ENCODE measurements at regions of chr5 and their contacts with region 1.

Region 1: DNA sequence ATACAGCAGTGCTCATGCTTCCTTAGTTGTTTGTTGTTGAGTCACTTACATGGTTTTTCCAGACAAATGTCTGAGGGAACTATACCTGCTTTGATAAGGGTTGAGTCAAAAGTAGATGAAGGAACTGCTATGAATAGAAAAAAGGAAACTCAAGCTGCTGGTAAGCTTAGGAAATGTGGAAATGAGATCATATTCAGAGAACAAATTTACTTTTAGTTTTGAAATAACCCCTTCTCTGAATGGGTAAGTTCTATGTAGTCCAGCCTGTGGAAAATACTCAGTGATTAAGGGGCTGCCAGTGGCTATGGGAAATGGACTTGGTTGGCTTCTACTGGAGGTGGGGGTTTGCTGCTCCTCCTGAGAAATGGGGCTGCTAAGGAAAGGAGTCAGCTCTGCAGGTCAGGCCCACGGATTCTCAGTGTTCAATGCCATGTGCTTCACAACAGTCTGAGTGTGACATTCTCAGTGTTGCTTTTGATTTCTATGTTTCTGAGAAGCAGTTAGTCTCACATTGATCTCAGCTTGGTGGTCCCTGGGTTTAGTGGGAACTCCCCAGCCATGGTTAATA is 47.7 kb upstream of the GLRX start:
- DNase-seq: peak; percentile 27
- H3K4me3 Mint-ChIP-seq: peak overlapping the region; percentile 55
- H3K27ac Mint-ChIP-seq: peak overlapping the region; percentile 90
- H3K4me1 Mint-ChIP-seq: peaks cover 43% of the 10 kb centered on the region
- H3K27me3 Mint-ChIP-seq: no peaks in the 10 kb centered on the region

Region 2: DNA sequence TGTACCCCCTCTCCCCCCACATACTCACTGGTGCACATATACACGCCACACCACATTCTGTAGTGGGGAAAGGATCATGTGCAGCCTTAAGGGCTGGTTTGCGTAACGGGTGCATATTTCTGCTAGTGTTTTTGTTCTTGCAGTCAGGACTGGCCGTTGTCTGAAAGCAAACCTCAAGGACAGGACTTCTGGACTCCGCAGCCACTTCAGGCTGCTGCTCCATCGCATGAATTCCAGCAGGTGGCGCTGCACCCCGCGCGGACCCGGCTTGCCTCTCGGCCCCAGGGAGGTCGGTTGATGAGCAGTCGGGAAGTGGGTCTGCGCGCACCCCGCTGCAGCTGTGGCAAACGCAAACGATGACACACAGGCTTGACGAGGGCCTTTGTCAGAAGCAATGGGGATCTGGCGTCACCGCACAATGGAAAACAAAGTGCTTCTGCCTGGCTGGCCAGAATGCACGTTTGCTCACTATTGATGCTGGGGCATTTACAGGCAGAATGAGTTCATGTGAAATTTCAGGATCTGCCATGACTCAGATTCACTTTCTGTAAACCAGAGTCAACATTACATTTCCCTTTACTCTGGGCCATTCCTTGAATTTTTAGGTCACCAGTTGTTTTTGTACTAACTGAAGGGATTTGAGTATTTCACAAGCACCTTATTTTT is 11.4 kb before region 1 on chr5:
- CTCF ChIA-PET with region 1: interaction called, 12 read pairs
- POLR2A ChIA-PET with region 1: no interaction called
- DNase-seq: peak; percentile 90
- H3K4me3 Mint-ChIP-seq: peak overlapping the region; percentile 38
- H3K27ac Mint-ChIP-seq: peak overlapping the region; percentile 52
- H3K4me1 Mint-ChIP-seq: peaks cover 50% of the 10 kb centered on the region
- H3K27me3 Mint-ChIP-seq: no peaks in the 10 kb centered on the region

Region 3: DNA sequence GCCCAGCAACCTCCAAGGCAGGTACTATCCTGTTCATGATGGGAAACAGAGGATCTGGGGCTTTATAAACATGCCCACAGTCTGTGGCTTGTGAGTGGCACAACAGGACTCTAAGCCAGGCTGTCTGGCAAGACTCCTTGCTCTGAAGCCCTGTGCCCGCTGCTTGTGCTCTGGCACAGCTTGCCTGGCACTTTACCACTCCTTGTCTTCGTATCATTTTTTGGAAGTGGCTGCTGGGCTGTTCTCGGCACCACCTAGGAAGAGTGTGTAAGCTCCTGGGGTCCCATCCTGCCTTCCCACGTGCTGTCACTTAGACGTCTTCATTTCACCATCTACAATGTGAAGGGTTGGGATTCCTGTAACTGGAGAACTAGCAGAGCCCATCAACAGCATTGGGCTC is 11.6 kb after region 1 on chr5:
- CTCF ChIA-PET with region 1: interaction called, 11 read pairs
- POLR2A ChIA-PET with region 1: no interaction called
- DNase-seq: no peak
- H3K4me3 Mint-ChIP-seq: no peak overlapping the region
- H3K27ac Mint-ChIP-seq: no peak overlapping the region
- H3K4me1 Mint-ChIP-seq: no peaks in the 10 kb centered on the region
- H3K27me3 Mint-ChIP-seq: no peaks in the 10 kb centered on the region